IMR-90 (cell line): ENCODE measurements at regions of chr19 and their contacts with region 1.

Region 1: GRCh38 chr19:34926685-34927375 is at the start of gene ZNF30:
- DNase-seq: peak; percentile 88
- ATAC-seq: peak; percentile 100
- H3K4me3 ChIP-seq: peak within 1 kb of the TSS; percentile 80
- H3K27ac ChIP-seq: peak within 1 kb of the TSS; percentile 74
- H3K4me1 ChIP-seq: no peaks in the 10 kb centered on the region
- H3K27me3 ChIP-seq: no peaks in the 10 kb centered on the region
- CTCF ChIP-seq: no peak
- POLR2A ChIP-seq: no peak
- RAD21 ChIP-seq: no peak
- total RNA-seq, gene ZNF30: 2.8 and 2.9 TPM in 2 replicates

Region 2: GRCh38 chr19:34733826-34734600 is 192.8 kb before region 1 on chr19 and contains the start of gene ZNF181:
- CTCF ChIA-PET with region 1: no interaction called
- POLR2A ChIA-PET with region 1: no interaction called
- dilution Hi-C with region 1: no loop called
- in situ Hi-C with region 1: no loop called
- intact Hi-C with region 1: loop called (anchors 1 kb)
- DNase-seq: peak; percentile 86
- ATAC-seq: peak; percentile 94
- H3K4me3 ChIP-seq: peak within 1 kb of the TSS; percentile 72
- H3K27ac ChIP-seq: peak within 1 kb of the TSS; percentile 94
- H3K4me1 ChIP-seq: peaks cover 8% of the 10 kb centered on the region
- H3K27me3 ChIP-seq: no peaks in the 10 kb centered on the region
- CTCF ChIP-seq: no peak
- POLR2A ChIP-seq: peak; percentile 81
- RAD21 ChIP-seq: no peak
- total RNA-seq, gene ZNF181: 7.5 and 11.1 TPM in 2 replicates

Region 3: GRCh38 chr19:34772697-34773554 is 153.9 kb before region 1 on chr19 and contains the start of gene ZNF599:
- CTCF ChIA-PET with region 1: no interaction called
- POLR2A ChIA-PET with region 1: no interaction called
- dilution Hi-C with region 1: no loop called
- in situ Hi-C with region 1: no loop called
- intact Hi-C with region 1: loop called (anchors 5 kb)
- DNase-seq: peak; percentile 86
- ATAC-seq: peak; percentile 99
- H3K4me3 ChIP-seq: peak within 1 kb of the TSS; percentile 74
- H3K27ac ChIP-seq: peak within 1 kb of the TSS; percentile 65
- H3K4me1 ChIP-seq: no peaks in the 10 kb centered on the region; the same call in 1 of the 2 replicates
- H3K27me3 ChIP-seq: no peaks in the 10 kb centered on the region
- CTCF ChIP-seq: no peak
- POLR2A ChIP-seq: peak; percentile 36; the same call in 1 of the 2 replicates
- RAD21 ChIP-seq: no peak
- total RNA-seq, gene ZNF599: 3.4 and 4.2 TPM in 2 replicates

Region 4: DNA sequence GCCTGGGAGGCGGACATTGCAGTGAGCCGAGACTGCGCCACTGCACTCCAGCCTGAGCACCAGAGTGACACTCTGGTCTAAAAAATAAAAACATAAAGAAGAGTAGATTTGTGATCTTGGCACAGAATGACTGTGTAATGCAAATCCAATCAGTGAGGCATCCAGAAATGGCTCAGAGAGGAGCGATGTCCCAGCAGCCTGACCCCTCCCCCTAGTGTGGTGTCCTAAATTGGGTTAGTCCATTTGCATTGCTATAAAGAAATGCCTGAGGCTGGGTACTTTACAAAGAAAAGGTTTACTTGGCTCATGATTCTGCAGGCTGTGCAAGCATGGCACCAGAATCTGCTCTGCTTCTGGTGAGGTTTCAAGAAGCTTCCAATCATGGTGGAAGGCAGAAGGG is 59.2 kb before region 1 on chr19:
- CTCF ChIA-PET with region 1: no interaction called
- POLR2A ChIA-PET with region 1: no interaction called
- dilution Hi-C with region 1: no loop called
- in situ Hi-C with region 1: no loop called
- intact Hi-C with region 1: loop called (anchors 5 kb)
- DNase-seq: no peak
- ATAC-seq: no peak
- H3K4me3 ChIP-seq: no peak overlapping the region
- H3K27ac ChIP-seq: no peak overlapping the region
- H3K4me1 ChIP-seq: no peaks in the 10 kb centered on the region
- H3K27me3 ChIP-seq: no peaks in the 10 kb centered on the region
- CTCF ChIP-seq: no peak
- POLR2A ChIP-seq: no peak
- RAD21 ChIP-seq: no peak

Region 5: GRCh38 chr19:34910770-34911169 is 16.1 kb before region 1 on chr19:
- CTCF ChIA-PET with region 1: no interaction called
- POLR2A ChIA-PET with region 1: no interaction called
- dilution Hi-C with region 1: no loop called
- in situ Hi-C with region 1: no loop called
- intact Hi-C with region 1: no loop called
- DNase-seq: no peak
- ATAC-seq: no peak
- H3K4me3 ChIP-seq: no peak overlapping the region
- H3K27ac ChIP-seq: no peak overlapping the region
- H3K4me1 ChIP-seq: no peaks in the 10 kb centered on the region
- H3K27me3 ChIP-seq: peaks cover 5% of the 10 kb centered on the region
- CTCF ChIP-seq: no peak
- POLR2A ChIP-seq: no peak
- RAD21 ChIP-seq: no peak

Region 6: DNA sequence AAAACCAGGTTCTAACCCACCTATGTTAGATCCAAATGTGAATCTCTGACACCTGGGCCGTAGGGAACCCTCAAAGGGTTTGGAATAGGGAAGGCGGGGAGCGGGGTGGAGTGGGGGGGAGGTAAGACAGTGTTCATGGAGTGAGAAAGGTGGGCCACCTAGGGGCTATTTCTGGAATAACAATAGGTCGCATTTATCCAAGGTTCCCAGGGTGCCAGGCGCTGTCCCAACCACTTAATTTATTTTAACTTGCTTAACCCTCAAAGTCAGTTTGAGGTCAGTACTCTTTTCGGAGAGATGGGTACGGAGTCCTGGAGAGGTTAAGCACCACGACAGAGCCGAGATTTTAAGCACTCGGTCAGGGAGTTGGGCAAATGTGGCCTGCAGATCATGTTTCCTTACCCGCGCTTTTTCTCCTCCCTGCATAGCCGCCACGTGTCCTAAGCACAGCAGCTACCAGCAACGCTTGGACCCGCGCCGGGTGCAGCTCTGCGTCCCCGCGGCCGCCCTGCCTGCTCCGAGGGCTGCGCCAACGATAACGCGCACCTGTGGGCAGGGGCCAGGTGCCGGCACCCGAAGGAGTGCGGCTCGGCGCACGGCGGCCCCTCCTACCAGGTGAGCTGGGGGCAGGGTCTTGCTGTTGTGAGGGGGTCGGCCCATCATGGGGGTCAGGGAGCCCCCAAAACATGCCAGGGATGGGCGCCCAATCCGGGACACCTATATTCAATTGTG is 163.8 kb after region 1 on chr19:
- CTCF ChIA-PET with region 1: no interaction called
- POLR2A ChIA-PET with region 1: no interaction called
- dilution Hi-C with region 1: no loop called
- in situ Hi-C with region 1: no loop called
- intact Hi-C with region 1: no loop called
- DNase-seq: peak; percentile 53
- ATAC-seq: peak; percentile 79
- H3K4me3 ChIP-seq: no peak overlapping the region
- H3K27ac ChIP-seq: no peak overlapping the region
- H3K4me1 ChIP-seq: peaks cover 3% of the 10 kb centered on the region
- H3K27me3 ChIP-seq: peaks cover 3% of the 10 kb centered on the region; the same call in 1 of the 2 replicates
- CTCF ChIP-seq: peak; percentile 66
- POLR2A ChIP-seq: no peak
- RAD21 ChIP-seq: peak; percentile 64

Region 7: GRCh38 chr19:35716801-35717666 is 790.2 kb after region 1 on chr19:
- CTCF ChIA-PET with region 1: no interaction called
- POLR2A ChIA-PET with region 1: no interaction called
- dilution Hi-C with region 1: no loop called
- in situ Hi-C with region 1: no loop called
- intact Hi-C with region 1: no loop called
- DNase-seq: peak; percentile 94
- ATAC-seq: peak; percentile 87
- H3K4me3 ChIP-seq: peak overlapping the region; percentile 72
- H3K27ac ChIP-seq: peak overlapping the region; percentile 62
- H3K4me1 ChIP-seq: peaks cover 14% of the 10 kb centered on the region
- H3K27me3 ChIP-seq: no peaks in the 10 kb centered on the region
- CTCF ChIP-seq: peak; percentile 81
- POLR2A ChIP-seq: no peak
- RAD21 ChIP-seq: peak; percentile 71